IMR-90 (cell line): ENCODE measurements at regions of chr15 and their contacts with region 1.

Region 1: DNA sequence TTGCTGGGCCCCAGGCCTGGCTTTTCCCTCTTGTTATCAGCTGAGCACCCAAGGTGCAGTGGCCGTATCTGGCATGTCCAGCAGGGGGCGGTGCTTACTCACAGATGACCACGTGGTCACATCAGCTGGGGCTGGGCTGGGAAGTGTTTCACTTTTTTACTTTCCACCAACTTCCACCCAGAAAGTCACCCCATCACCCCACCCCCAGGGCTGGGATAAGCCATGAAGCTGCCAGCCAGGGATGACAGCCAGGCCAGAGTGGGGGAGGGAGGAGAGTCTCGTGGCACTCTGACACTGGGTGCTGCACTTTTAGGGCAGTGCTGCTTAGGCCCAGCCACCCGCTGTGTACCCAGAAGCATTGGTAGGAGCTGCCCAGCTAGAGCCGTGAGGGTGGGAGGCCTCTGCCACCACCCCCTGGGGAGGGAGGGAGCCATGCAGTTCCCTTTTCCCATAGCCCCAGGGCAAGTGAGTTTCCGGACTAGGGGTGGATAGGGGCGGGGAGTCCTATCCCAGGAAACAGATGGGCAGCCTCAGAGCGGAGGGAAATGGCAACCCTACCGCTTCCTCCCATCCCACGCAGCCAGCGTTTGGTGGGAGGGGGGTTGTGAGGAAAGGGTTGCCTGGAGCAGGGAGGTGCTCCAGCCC is 6.1 kb downstream of the PPCDC start:
- DNase-seq: peak; percentile 79
- ATAC-seq: peak; percentile 98
- H3K4me3 ChIP-seq: no peak overlapping the region
- H3K27ac ChIP-seq: no peak overlapping the region
- H3K4me1 ChIP-seq: peaks cover 11% of the 10 kb centered on the region
- H3K27me3 ChIP-seq: no peaks in the 10 kb centered on the region
- CTCF ChIP-seq: peak; percentile 97
- POLR2A ChIP-seq: no peak
- RAD21 ChIP-seq: peak; percentile 97

Region 2: DNA sequence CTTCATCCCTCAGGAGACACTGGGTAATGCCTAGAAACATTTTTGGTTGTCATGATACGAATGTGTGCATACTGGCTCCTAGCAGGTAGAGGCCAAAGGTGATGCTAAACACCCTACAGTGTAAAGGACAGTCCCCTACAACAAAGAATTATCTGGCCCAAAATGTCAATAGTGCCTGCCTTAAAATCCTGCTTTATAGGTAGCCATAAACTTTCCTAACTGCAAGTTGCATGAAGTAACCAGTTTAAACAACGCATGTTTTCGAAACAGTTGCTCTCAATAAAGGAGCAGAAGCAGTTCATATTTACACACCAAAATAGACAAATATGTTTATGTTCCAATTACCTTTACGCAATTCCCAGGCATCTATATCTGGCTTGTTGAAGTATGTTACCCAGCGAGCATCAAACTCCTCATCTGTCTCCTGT is 100.7 kb before region 1 on chr15:
- CTCF ChIA-PET with region 1: no interaction called
- POLR2A ChIA-PET with region 1: no interaction called
- dilution Hi-C with region 1: no loop called
- in situ Hi-C with region 1: no loop called
- intact Hi-C with region 1: no loop called
- DNase-seq: no peak
- ATAC-seq: no peak
- H3K4me3 ChIP-seq: no peak overlapping the region
- H3K27ac ChIP-seq: no peak overlapping the region
- H3K4me1 ChIP-seq: no peaks in the 10 kb centered on the region
- H3K27me3 ChIP-seq: no peaks in the 10 kb centered on the region
- CTCF ChIP-seq: no peak
- POLR2A ChIP-seq: no peak
- RAD21 ChIP-seq: no peak

Region 3: DNA sequence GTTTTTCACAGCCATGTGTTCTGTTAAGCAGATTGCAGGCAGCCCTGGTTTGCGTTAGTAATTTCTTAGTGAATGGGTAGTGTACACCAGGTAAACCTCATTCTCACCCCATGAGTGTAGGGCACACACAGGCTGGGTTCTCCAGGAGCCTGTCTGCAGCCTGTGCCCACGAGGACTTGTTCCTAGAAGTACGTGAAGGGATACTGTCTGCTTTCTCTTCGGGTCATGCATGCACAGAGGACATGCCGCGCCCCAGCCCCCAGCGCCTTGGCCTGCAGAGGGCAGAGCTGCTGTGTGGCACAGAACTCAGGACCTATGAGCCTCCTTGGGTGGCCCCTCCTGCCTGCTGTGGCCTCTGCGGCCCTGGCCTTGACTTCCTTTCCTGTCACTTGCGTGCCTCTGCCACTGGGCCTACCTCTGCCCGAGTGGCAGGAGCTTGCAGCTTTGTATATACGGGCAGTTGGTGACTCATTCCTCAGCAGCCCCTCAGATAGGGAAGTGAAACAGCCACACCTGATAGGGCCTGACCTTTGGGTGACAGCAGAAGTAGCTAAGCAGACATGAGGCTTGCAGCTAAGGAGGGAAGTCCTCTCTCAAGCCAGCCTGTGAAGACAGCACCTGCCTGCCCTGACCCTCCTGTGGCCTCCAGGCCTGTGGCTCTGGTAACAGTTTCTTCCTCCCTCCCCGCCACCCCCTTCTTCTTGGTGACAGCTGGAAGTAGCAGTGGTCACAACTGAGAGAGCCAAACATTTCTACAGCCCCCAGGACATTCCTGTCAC is 13.4 kb after region 1 on chr15:
- CTCF ChIA-PET with region 1: interaction called, 13 read pairs
- POLR2A ChIA-PET with region 1: no interaction called
- dilution Hi-C with region 1: no loop called
- in situ Hi-C with region 1: no loop called
- intact Hi-C with region 1: no loop called
- DNase-seq: peak; percentile 64
- ATAC-seq: peak; percentile 5
- H3K4me3 ChIP-seq: no peak overlapping the region
- H3K27ac ChIP-seq: peak overlapping the region; percentile 74
- H3K4me1 ChIP-seq: peaks cover 28% of the 10 kb centered on the region
- H3K27me3 ChIP-seq: no peaks in the 10 kb centered on the region
- CTCF ChIP-seq: peak; percentile 34
- POLR2A ChIP-seq: no peak
- RAD21 ChIP-seq: peak; percentile 40

Region 4: GRCh38 chr15:75069301-75069925 is 39.9 kb after region 1 on chr15:
- CTCF ChIA-PET with region 1: no interaction called
- POLR2A ChIA-PET with region 1: no interaction called
- dilution Hi-C with region 1: no loop called
- in situ Hi-C with region 1: no loop called
- intact Hi-C with region 1: no loop called
- DNase-seq: no peak
- ATAC-seq: no peak
- H3K4me3 ChIP-seq: no peak overlapping the region
- H3K27ac ChIP-seq: no peak overlapping the region
- H3K4me1 ChIP-seq: no peaks in the 10 kb centered on the region
- H3K27me3 ChIP-seq: peaks cover 17% of the 10 kb centered on the region
- CTCF ChIP-seq: no peak
- POLR2A ChIP-seq: no peak
- RAD21 ChIP-seq: no peak

Region 5: DNA sequence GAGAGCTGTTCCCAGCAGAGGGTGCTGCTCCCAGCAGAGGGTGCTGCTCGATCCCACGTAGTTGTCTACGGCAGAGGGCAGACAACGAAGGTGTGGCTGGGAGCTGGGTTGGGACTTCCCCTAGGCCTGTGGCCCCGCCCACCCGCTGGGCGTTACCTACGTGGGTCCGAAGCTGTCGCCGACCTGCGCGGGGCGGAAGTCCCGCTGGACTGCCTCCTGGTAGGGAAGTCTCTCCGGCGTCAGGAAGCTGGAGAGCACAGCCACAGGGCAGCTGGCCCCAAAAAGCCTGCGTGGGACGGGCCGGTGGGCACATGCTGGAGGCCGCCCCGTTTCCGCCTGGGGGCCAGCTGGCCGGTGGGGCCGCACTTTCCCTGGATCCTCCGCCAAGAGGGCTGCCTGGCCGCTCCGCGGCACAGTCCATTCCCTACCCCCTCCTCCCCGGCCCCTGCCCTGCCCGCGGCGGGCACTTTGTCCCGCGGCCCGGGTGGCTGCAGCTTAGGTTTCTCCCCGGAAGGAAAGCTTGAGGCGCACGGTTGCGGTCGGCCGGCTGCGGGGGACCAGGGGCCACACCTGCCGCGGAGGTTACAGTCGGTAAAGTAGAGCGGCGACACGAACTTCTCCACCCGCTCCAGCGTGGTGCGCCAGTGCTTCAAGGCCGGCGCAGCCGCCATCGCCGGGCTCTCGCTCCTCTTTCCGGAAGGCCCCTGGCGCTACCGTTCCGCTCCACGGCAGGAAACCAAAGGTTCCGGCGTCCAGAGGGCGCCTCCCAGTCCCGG is 338.6 kb after region 1 on chr15 and contains the start of gene MAN2C1:
- CTCF ChIA-PET with region 1: no interaction called
- POLR2A ChIA-PET with region 1: no interaction called
- dilution Hi-C with region 1: no loop called
- in situ Hi-C with region 1: no loop called
- intact Hi-C with region 1: loop called (anchors 2 kb)
- DNase-seq: peak; percentile 94
- ATAC-seq: peak; percentile 93
- H3K4me3 ChIP-seq: peak within 1 kb of the TSS; percentile 71
- H3K27ac ChIP-seq: peak within 1 kb of the TSS; percentile 86
- H3K4me1 ChIP-seq: peaks cover 4% of the 10 kb centered on the region
- H3K27me3 ChIP-seq: no peaks in the 10 kb centered on the region
- CTCF ChIP-seq: peak; percentile 78
- POLR2A ChIP-seq: peak; percentile 92
- RAD21 ChIP-seq: peak; percentile 58
- total RNA-seq, gene MAN2C1: 29.7 and 34.8 TPM in 2 replicates